Activated CD8-positive, alpha-beta memory T cell treated with anti-CD3 and anti-CD28 coated beads, Interleukin-2, amount 10 ng/mL, durations not matched to agents 7 days and 5 days (primary cell): ENCODE measurements at regions of chr3 and their contacts with region 1.

Region 1: GRCh38 chr3:66276705-66277274 is 56.0 kb downstream of the SLC25A26 start:
- DNase-seq: peak; percentile 73
- ATAC-seq: peak; percentile 47
- H3K4me3 Mint-ChIP-seq: no peak overlapping the region
- H3K27ac Mint-ChIP-seq: no peak overlapping the region
- H3K4me1 Mint-ChIP-seq: peaks cover 17% of the 10 kb centered on the region
- H3K27me3 Mint-ChIP-seq: no peaks in the 10 kb centered on the region

Region 2: DNA sequence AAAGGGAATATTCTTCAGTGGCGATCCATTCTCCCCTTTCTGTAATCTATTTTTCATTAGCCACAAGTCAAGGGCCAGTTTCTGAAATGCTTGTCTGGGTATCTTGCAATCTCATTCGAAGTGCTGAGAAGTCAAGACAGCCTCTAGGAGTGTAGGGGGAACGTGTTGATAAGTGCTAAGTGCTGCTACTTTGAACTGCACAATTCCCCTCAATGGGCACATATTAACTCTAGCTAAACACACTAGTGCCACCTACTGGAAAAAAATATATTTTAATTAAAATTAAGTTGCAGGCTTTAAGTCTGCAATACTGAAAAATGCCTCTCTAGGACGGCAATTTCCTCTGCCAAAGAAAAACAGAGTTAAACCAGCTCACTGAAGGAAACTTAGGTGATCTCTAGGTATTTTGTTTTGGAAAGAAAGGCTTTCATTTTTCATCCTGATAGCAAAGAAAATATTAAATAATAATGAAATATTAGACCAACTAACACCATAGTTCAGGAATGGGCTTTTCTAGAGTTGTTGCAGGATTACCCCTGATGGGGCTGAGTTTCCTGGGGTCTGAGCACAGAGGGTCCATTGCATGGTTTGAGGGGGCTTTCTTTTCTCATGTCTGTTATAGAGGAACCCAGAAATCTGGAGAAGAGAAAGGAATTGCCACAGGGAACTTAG is 539.4 kb after region 1 on chr3:
- CTCF ChIA-PET with region 1: interaction called, 13 read pairs
- DNase-seq: no peak
- ATAC-seq: peak; percentile 65
- H3K4me3 Mint-ChIP-seq: no peak overlapping the region
- H3K27ac Mint-ChIP-seq: no peak overlapping the region
- H3K4me1 Mint-ChIP-seq: no peaks in the 10 kb centered on the region
- H3K27me3 Mint-ChIP-seq: peaks cover 14% of the 10 kb centered on the region